ENCODE measurements at regions of chr6 and their contacts with region 1.

Region 1: GRCh38 chr6:61755739-61756138 is 530.3 kb downstream of the KHDRBS2 start:
- DNase-seq: no peak
- H3K4me3 ChIP-seq: no peak overlapping the region
- H3K27ac ChIP-seq: no peak overlapping the region
- H3K4me1 ChIP-seq: no peaks in the 10 kb centered on the region
- H3K27me3 ChIP-seq: no peaks in the 10 kb centered on the region
- CTCF ChIP-seq: no peak
- POLR2A ChIP-seq: no peak

Region 2: GRCh38 chr6:61833176-61833755 is 77.5 kb after region 1 on chr6:
- intact Hi-C with region 1: loop called (anchors 5 kb)
- DNase-seq: no peak
- H3K4me3 ChIP-seq: no peak overlapping the region
- H3K27ac ChIP-seq: no peak overlapping the region
- H3K4me1 ChIP-seq: no peaks in the 10 kb centered on the region
- H3K27me3 ChIP-seq: no peaks in the 10 kb centered on the region
- CTCF ChIP-seq: no peak
- POLR2A ChIP-seq: no peak

Region 3: GRCh38 chr6:62129127-62129526 is 373.4 kb after region 1 on chr6:
- intact Hi-C with region 1: no loop called
- DNase-seq: no peak
- H3K4me3 ChIP-seq: no peak overlapping the region
- H3K27ac ChIP-seq: no peak overlapping the region
- H3K4me1 ChIP-seq: no peaks in the 10 kb centered on the region
- H3K27me3 ChIP-seq: no peaks in the 10 kb centered on the region
- CTCF ChIP-seq: no peak
- POLR2A ChIP-seq: no peak

Region 4: DNA sequence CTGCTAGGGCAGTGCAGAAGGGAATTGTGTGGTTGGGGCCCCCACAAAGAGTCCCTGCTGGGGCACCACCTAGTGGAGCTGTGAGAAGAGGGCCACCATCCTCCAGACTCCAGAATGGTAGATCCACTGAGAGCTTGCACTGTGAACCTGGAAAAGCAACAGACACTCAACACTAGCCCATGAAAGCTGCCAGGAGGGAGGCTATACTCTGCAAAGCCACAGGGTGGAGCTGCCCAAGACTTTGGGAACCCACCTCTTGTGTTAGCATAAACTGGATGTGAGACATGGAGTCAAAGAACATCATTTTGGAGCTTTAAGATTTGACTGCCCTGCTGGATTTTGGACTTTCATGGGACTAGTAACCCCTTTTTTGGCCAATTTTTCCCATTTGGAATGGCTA is 858.7 kb after region 1 on chr6:
- intact Hi-C with region 1: no loop called
- DNase-seq: no peak
- H3K4me3 ChIP-seq: no peak overlapping the region
- H3K27ac ChIP-seq: no peak overlapping the region
- H3K4me1 ChIP-seq: no peaks in the 10 kb centered on the region
- H3K27me3 ChIP-seq: peaks cover 0 to 9% of the 10 kb centered on the region in 2 donors
- CTCF ChIP-seq: no peak
- POLR2A ChIP-seq: no peak